HepG2 (cell line): ENCODE measurements at regions of chr2 and their contacts with region 1.

Region 1: DNA sequence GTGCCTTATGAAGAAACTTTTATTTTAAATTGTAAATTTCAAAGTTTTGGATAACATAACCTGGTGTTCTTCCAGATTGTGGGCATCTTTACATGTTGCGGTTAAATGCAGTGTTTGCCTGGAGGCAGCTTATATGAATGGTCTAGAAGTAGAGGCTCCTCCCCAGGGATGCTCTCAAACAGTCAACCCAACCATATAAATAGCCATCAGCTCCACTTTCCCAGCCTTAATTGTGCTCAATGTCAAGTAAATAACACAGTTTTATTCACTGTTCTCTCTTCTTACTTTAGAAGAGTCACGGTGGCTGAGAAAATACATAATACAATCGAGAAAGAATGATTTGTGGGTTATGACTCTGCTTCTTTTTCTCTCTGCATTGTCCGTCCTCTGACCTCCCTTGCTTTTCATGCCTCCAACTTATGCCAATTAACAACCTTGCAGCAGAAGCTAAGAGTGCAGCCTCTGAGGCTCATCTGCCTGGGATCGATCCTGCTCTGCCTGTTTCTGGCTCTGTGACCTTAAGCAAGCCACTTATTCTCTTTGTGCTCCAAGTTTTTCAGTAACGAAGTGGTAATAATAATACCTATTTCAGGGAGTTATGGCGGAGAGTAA is 100.3 kb downstream of the DAW1 start:
- DNase-seq: no peak
- ATAC-seq: no peak
- H3K4me3 ChIP-seq: no peak overlapping the region
- H3K27ac ChIP-seq: no peak overlapping the region
- H3K4me1 ChIP-seq: no peaks in the 10 kb centered on the region
- H3K27me3 ChIP-seq: peaks cover 0 to 1% of the 10 kb centered on the region in 2 experiments; a peak in 2 of 5 replicates
- CTCF ChIP-seq: no peak
- EP300 ChIP-seq: no peak
- POLR2A ChIP-seq: no peak
- RAD21 ChIP-seq: no peak

Region 2: DNA sequence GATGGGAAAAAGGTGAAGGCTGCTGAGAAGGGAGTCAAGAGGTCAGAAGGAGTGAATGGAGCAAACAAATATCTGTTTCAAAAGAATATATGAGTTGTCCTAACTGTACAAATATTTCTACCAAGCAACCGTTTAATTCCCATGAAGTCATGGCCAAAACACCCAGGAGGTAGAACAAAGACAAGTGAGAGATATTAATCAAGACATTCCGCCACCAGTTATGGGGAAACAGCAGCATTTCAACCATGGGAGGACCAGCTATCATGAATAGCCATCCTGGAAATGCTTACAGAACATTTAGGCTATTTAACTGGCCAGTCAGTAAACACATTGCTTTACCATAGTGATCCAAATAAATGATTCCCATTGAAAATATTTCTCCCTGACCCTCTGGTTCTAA is 1568.4 kb before region 1 on chr2:
- CTCF ChIA-PET with region 1: no interaction called
- POLR2A ChIA-PET with region 1: no interaction called
- in situ Hi-C with region 1: no loop called
- intact Hi-C with region 1: loop called (anchors 5 kb)
- DNase-seq: peak; percentile 94
- ATAC-seq: peak; percentile 26; the same call in 1 of the 3 replicates
- H3K4me3 ChIP-seq: no peak overlapping the region
- H3K27ac ChIP-seq: no peak overlapping the region
- H3K4me1 ChIP-seq: peaks cover 10% of the 10 kb centered on the region
- H3K27me3 ChIP-seq: no peaks in the 10 kb centered on the region
- CTCF ChIP-seq: no peak
- EP300 ChIP-seq: no peak
- POLR2A ChIP-seq: no peak
- RAD21 ChIP-seq: no peak